ENCODE measurements at regions of chr3 and their contacts with region 1.

Region 1: GRCh38 chr3:48125886-48126622 is 62.2 kb downstream of the CDC25A start:
- DNase-seq: no peak
- ATAC-seq: no peak

Region 2: GRCh38 chr3:47273564-47273963 is 852.5 kb before region 1 on chr3:
- intact Hi-C with region 1: no loop called
- DNase-seq: no peak
- ATAC-seq: no peak

Region 3: GRCh38 chr3:48069339-48069738 is 56.7 kb before region 1 on chr3:
- intact Hi-C with region 1: no loop called
- DNase-seq: no peak
- ATAC-seq: no peak

Region 4: GRCh38 chr3:48185129-48185528 is 59.1 kb after region 1 on chr3:
- intact Hi-C with region 1: loop called (anchors 2 kb)
- DNase-seq: no peak
- ATAC-seq: no peak

Region 5: DNA sequence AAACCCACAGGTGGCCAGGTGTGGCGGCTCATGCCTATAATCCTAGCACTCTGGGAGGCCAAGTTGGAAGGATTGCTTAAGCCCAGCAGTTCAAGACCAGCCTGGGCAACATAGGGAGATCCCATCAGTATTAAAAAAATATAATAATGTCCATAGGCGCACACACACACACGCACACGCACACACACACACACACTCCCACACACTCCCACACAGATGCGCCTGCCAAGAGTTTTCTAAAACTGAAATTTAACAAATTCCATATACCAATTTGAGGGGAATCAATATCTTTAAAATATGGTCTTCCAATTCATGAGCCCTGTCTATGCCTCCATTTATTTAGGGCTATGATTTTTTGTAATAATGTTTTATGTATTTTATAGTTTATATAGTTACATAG is 360.9 kb after region 1 on chr3:
- intact Hi-C with region 1: no loop called
- DNase-seq: no peak
- ATAC-seq: no peak

Measured in sciatic nerve (tissue), 2 donors.